Activated CD4-positive, alpha-beta memory T cell treated with anti-CD3 and anti-CD28 coated beads for 36 hours (primary cell): ENCODE measurements at regions of chr2 and their contacts with region 1.

Region 1: DNA sequence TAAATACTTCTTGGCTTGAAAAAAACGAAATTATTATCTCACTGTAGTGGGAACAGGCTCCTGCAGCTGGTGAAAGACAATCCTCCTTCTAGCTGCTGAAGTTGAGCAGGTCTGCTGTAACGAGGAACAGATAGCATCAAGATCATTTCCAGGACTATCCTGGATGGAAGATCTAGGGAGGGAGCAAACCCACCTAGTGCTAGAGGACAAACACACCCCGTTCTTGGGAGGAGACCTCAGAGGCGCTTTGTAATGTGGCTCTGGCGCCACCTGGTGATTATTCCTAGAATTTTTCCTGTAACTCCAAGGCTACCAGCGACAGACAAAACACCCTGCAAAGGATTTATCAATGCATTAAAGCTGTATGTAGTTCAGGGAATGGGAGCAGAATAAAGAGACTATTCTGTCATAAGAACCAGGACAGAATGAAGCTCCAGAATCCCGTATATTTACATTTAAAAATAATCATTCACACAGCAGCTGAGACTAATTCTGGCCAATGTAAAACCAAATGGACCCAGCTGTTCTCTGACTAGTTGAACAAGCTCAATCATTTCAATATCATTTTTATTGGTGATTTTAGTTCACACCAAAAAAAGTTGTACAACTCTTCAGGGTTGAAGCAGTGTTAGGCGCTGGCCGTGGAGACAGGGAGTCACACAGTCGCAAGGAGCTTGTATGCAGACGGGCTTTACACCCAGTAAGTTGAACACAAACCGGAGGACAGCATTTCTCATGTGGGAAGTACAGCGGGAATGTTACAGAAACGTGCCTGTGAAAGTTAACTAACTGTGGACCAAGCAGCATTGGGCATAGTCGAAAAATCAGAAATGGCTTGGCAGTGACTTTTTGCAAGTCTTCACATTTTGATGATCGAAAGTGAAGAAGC is 290.3 kb downstream of the TRIB2 start:
- DNase-seq: peak; percentile 68
- H3K4me3 Mint-ChIP-seq: no peak overlapping the region
- H3K27ac Mint-ChIP-seq: no peak overlapping the region
- H3K4me1 Mint-ChIP-seq: no peaks in the 10 kb centered on the region
- H3K27me3 Mint-ChIP-seq: peaks cover 8% of the 10 kb centered on the region

Region 2: GRCh38 chr2:11863513-11864328 is 1143.4 kb before region 1 on chr2:
- CTCF ChIA-PET with region 1: interaction called, 14 read pairs
- POLR2A ChIA-PET with region 1: no interaction called
- intact Hi-C with region 1: loop called (anchors 10 kb)
- DNase-seq: peak; percentile 76
- H3K4me3 Mint-ChIP-seq: peak overlapping the region; percentile 25
- H3K27ac Mint-ChIP-seq: no peak overlapping the region
- H3K4me1 Mint-ChIP-seq: peaks cover 41% of the 10 kb centered on the region
- H3K27me3 Mint-ChIP-seq: no peaks in the 10 kb centered on the region

Region 3: DNA sequence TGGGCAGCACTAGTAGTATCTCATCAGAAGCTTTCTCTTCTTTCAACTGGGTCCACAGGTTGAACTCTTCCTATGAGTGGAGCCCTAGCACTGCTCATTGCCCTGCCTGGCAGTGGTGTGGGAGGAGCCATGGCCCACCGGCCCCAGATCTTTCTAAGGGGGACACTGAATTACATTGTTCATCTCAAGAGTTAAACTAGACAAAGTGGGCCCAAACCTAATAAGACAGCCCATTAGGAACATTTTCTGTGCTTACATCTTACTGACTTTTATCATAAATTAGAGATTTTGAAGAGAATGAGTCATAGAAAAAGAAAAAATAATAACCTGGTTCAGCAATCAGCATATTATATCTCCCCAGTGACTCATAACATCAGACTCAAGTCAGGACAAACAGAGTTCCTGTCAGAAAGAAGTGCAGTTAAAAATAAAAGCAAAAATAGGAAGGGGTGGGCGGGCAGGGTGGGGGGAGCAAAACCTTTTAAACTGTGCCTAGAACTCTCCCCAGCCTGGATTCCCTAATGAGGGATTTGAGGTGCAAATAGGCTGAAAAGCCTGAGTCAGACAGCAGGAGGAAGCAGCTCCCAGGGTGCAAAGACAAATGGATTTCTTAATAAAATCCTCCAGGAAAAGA is 451.9 kb before region 1 on chr2:
- CTCF ChIA-PET with region 1: no interaction called
- POLR2A ChIA-PET with region 1: no interaction called
- intact Hi-C with region 1: loop called (anchors 5 kb)
- DNase-seq: peak; percentile 52
- H3K4me3 Mint-ChIP-seq: peak overlapping the region; percentile 21
- H3K27ac Mint-ChIP-seq: peak overlapping the region; percentile 80
- H3K4me1 Mint-ChIP-seq: peaks cover 40% of the 10 kb centered on the region
- H3K27me3 Mint-ChIP-seq: no peaks in the 10 kb centered on the region

Region 4: DNA sequence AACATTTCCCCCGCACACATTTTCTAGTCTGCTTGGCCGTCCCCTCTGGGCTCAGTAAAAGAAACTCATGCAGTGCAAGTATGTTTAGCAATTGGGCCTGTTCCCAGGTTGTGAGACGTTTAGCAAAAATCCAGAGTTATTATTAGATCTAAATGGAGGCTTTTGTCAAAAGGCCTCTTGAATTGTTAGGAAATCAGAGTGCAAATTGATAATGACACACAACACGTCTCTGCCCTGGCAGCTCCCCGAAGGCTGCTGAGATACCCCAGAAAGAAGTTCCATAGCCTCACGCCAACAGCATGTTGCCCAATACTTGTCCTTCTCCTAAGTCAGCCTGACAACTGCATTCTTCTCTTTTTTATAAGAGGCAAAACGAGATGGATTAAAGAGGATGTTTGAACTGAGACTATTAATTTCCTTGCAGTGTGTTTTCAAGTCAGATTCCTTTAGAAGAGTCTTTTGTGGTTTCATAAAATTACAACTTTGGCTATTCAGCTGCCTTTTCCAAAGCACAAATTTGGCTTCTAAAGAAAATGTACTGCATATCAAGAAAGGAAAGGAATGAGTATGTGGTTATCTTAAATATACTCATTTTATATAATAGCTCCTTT is 88.1 kb before region 1 on chr2:
- CTCF ChIA-PET with region 1: no interaction called
- POLR2A ChIA-PET with region 1: no interaction called
- intact Hi-C with region 1: no loop called
- DNase-seq: no peak
- H3K4me3 Mint-ChIP-seq: no peak overlapping the region
- H3K27ac Mint-ChIP-seq: no peak overlapping the region
- H3K4me1 Mint-ChIP-seq: no peaks in the 10 kb centered on the region
- H3K27me3 Mint-ChIP-seq: peaks cover 6% of the 10 kb centered on the region

Region 5: DNA sequence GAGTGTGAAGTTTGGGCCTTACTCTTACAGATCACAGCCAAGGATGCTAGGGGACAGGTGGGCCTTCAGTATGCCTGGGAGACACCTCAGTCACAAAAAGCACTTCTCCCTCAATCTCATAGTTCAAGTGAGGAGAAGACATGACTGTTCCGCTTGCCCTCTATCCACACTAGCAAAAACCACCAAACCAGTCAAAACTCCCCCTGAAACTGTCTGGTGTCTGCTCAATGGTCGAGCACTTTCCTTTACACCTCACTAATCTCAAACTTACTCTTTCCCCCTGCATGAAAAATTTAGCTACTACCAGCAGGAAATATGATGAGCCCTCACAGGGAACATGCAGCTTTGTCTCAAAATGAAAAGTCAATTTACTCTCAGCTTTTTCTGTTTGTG is 58.1 kb before region 1 on chr2:
- CTCF ChIA-PET with region 1: interaction called, 12 read pairs
- POLR2A ChIA-PET with region 1: no interaction called
- intact Hi-C with region 1: no loop called
- DNase-seq: peak; percentile 46
- H3K4me3 Mint-ChIP-seq: no peak overlapping the region
- H3K27ac Mint-ChIP-seq: no peak overlapping the region
- H3K4me1 Mint-ChIP-seq: peaks cover 9% of the 10 kb centered on the region
- H3K27me3 Mint-ChIP-seq: peaks cover 4% of the 10 kb centered on the region

Region 6: DNA sequence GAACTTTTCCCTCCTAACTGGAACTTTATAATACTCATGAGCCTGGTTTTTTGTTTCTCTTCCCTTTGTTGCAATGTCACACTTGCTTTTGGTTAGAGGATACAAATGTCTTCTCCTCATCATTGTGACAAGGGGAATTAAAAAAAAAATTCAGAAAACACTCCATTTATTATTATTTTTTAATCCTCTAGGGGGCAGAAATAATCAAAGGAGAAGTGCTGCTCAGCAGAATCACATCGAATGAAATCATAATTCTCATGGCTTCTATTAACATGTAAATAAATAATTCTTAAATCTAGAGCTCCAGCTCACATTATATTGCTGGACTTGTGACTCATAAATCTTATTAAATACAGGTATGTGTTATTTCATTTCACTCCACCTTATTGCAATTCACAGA is 16.6 kb before region 1 on chr2:
- CTCF ChIA-PET with region 1: interaction called, 22 read pairs
- POLR2A ChIA-PET with region 1: no interaction called
- intact Hi-C with region 1: no loop called
- DNase-seq: no peak
- H3K4me3 Mint-ChIP-seq: no peak overlapping the region
- H3K27ac Mint-ChIP-seq: no peak overlapping the region
- H3K4me1 Mint-ChIP-seq: peaks cover 7% of the 10 kb centered on the region
- H3K27me3 Mint-ChIP-seq: no peaks in the 10 kb centered on the region

Region 7: DNA sequence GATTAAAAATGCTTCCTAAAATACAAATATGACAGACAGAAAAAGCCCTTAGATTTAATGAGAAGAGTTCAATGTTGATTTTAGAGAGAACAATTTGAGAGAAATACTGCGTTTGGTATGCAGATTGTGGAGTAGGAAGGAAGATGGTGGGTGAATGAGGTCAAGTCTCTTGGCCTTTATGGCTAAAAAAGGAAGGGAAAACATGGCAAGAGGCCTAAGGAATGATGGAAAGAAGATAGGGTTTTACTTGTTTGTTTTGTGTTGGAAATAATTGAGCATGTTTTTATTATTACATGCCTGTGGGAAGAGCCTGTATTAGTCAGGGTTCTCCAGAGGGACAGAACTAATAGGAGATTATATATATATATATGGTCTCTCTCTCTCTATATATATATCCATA is 27.8 kb after region 1 on chr2:
- CTCF ChIA-PET with region 1: interaction called, 11 read pairs
- POLR2A ChIA-PET with region 1: no interaction called
- intact Hi-C with region 1: no loop called
- DNase-seq: no peak
- H3K4me3 Mint-ChIP-seq: no peak overlapping the region
- H3K27ac Mint-ChIP-seq: no peak overlapping the region
- H3K4me1 Mint-ChIP-seq: no peaks in the 10 kb centered on the region
- H3K27me3 Mint-ChIP-seq: peaks cover 16% of the 10 kb centered on the region